A549 (cell line): ENCODE measurements at regions of chr10 and their contacts with region 1.

Region 1: DNA sequence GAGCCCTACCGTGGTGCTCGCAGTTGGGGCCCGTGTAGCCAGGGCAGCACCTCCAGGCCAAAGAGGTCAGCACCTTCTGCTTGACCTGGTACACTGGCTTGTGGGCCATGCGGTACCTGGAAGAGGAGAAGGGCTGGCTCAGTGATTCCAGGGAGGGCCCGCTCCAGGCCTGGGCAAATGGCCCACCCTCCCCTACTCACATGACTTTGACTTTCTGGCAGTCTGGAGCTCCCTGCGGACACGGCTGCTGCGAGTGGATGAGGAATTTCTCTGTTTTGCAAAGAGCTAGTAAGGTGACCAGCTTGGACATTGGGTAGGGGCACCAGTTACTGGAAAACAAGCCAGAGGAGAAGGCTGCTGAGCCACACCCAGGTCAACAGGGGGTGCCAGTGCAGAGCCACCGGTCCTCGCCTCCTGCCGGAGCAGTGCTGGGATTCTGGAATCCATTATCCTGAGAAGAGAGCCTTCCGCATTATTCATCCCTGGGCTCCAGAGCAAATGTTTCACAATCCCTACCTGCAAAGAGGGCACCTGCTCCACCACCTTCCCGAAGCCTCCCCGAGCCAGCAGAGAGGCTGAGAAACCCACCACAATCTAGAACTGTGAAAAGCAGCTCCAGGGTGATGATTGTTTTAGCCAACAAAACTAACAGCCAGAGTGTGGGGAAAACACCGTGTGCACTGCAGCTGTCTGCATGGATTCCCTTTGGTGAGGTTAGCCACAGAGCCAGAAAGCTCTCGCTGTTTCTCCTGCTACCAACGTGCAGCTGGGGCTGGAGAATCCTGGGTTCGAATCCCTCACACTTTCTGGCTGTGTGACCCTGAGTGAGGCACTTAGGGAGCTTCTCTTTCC is 11.8 kb downstream of the MMRN2 start:
- DNase-seq: peak in 1 of 2 experiments; percentile 56
- ATAC-seq: peak; percentile 53 to 88; a peak in 4 of 6 replicates
- H3K4me3 ChIP-seq: no peak overlapping the region
- H3K27ac ChIP-seq: no peak overlapping the region
- H3K4me1 ChIP-seq: 0 out of 3 replicates have a peak, but pooled peaks cover 4% of the 10 kb centered on the region
- CTCF ChIP-seq: peak; percentile 29; the same call in 2 of the 3 replicates
- EP300 ChIP-seq: no peak
- POLR2A ChIP-seq: no peak
- RAD21 ChIP-seq: peak; percentile 47 to 71

Region 2: GRCh38 chr10:86821388-86821999 is 124.1 kb before region 1 on chr10:
- CTCF ChIA-PET with region 1: no interaction called
- POLR2A ChIA-PET with region 1: no interaction called
- DNase-seq: no peak
- ATAC-seq: no peak
- H3K4me3 ChIP-seq: no peak overlapping the region
- H3K27ac ChIP-seq: no peak overlapping the region
- H3K4me1 ChIP-seq: no peaks in the 10 kb centered on the region
- CTCF ChIP-seq: no peak
- EP300 ChIP-seq: no peak
- POLR2A ChIP-seq: no peak
- RAD21 ChIP-seq: no peak

Region 3: DNA sequence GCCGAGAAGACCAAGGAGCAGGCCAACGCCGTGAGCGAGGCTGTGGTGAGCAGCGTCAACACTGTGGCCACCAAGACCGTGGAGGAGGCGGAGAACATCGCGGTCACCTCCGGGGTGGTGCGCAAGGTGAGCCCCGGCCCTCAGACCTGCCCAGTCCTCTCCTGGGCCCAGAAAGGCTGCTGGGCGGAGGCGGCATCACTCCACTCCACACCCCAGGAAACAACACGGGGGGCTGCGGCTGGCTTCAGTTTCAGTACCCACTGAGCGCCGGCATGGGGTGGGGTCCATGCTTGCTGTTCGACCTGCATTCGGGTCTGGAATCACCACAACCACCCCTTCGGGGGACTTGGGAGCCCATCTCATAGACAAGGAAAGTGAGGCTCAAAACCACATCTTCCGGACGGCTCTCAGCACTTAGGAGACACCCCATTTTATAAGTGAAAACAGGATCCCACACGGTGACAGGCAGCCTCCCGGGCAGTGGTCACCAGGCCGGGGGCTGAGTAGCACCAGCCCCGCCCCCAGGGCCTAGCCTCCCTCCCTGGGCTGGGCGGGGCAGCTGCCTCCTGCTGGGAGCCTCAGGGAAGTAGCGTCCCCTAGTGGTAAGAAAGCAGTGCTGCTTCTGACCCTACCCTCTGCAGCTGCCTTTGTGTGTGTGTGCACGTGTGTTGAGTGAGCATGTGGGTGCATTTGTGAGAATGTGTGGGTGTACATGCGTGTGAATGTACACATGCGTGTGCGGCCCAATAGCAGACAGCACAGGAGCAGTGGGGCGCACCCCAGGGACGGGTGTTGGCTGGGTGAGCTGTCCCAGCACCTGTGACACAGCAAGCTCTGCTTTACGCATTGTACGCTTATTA is 14.6 kb after region 1 on chr10:
- CTCF ChIA-PET with region 1: interaction called, 38 read pairs
- POLR2A ChIA-PET with region 1: no interaction called
- DNase-seq: peak in 1 of 2 experiments; percentile 84
- ATAC-seq: peak; percentile 36 to 82
- H3K4me3 ChIP-seq: no peak overlapping the region
- H3K27ac ChIP-seq: peak overlapping the region; percentile 68 to 89
- H3K4me1 ChIP-seq: peaks cover 39% of the 10 kb centered on the region
- CTCF ChIP-seq: peak; percentile 82
- EP300 ChIP-seq: no peak
- POLR2A ChIP-seq: no peak
- RAD21 ChIP-seq: peak; percentile 64 to 82

Region 4: DNA sequence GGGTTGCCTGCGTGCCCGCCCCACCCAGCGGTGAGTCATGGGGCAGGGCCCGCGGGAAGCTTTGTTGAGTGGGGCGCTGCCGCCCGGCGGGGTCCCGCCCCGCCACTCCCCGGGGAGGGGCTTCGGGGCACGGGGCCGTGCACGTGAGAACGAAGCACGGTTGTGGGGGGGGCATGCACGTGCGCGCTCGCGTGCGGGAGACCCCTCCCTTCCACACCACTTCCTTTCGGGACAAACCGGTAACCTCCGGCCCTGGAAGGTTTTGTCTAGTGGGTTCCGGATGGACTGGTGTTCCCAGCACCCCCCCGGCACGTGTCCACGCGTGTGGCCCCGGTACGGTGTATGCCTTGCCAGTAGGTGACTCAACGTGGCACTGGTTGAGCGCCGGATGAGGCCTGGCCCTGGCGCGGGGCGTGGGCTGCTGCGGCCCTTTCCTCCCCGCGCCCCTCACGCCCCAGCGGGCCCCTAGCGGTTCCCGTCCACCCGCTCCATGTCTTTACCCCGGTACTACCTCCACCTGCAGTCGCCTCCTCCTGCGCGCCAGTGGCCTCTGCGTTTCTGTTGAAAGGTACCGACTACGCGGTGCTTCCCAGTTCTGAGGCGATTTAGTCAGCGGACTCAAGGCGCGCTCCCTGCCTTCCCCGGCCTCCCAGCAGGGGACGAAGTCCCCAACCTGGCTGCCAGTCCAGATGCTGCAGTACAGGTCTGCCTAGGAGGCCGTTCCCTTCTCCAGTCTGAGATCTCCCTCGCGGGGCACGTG is 25.8 kb after region 1 on chr10:
- CTCF ChIA-PET with region 1: interaction called, 57 read pairs
- POLR2A ChIA-PET with region 1: interaction called, 6 read pairs
- DNase-seq: peak; percentile 79 to 85
- ATAC-seq: peak; percentile 68 to 79
- H3K4me3 ChIP-seq: peak overlapping the region; percentile 59
- H3K27ac ChIP-seq: peak overlapping the region; percentile 87 to 96
- H3K4me1 ChIP-seq: peaks cover 40% of the 10 kb centered on the region
- CTCF ChIP-seq: no peak
- EP300 ChIP-seq: no peak
- POLR2A ChIP-seq: no peak
- RAD21 ChIP-seq: no peak; a peak in 1 of 5 replicates

Region 5: DNA sequence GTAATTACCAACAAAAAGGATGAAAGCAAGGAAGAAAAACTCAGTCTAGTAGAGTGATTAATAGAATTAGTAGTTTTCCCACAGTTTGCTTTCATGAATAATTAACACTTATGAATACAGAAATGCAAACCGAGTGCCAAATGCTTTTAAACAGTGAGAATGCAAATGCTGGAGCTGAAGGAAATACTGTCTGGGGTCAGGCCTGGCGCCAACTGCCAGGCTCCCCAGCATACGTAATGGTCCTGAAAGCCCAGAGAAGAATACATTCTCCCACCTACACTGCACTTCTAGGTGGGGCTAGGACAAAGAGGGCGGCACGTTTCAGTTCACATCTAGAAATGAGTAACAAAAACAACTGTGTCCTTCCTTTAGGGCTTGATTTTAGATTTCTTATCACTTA is 119.1 kb after region 1 on chr10:
- CTCF ChIA-PET with region 1: no interaction called
- POLR2A ChIA-PET with region 1: no interaction called
- DNase-seq: no peak
- ATAC-seq: no peak
- H3K4me3 ChIP-seq: no peak overlapping the region
- H3K27ac ChIP-seq: no peak overlapping the region
- H3K4me1 ChIP-seq: no peaks in the 10 kb centered on the region
- CTCF ChIP-seq: no peak
- EP300 ChIP-seq: no peak
- POLR2A ChIP-seq: no peak
- RAD21 ChIP-seq: no peak